Ovary (tissue), 10 donors: ENCODE measurements at regions of chr22 and their contacts with region 1.

Region 1: GRCh38 chr22:31089160-31090100 is 8.3 kb downstream of the SMTN start:
- DNase-seq: peak in 4 of 5 donors; percentile 60 to 71 (median 68)
- H3K4me3 ChIP-seq: no peak overlapping the region
- H3K27ac ChIP-seq: peak overlapping the region in 1 of 2 donors; percentile 15
- H3K4me1 ChIP-seq: peaks cover 7% of the 10 kb centered on the region
- H3K27me3 ChIP-seq: no peaks in the 10 kb centered on the region
- CTCF ChIP-seq: peak; percentile 64 to 68 (median 65)
- EP300 ChIP-seq: no peak
- POLR2A ChIP-seq: peak; percentile 8

Region 2: GRCh38 chr22:31148953-31149627 is 59.7 kb after region 1 on chr22:
- intact Hi-C with region 1: loop called in 2 of 4 experiments (anchors 5 to 10 kb)
- DNase-seq: peak; percentile 70 to 77 (median 72)
- H3K4me3 ChIP-seq: no peak overlapping the region
- H3K27ac ChIP-seq: no peak overlapping the region
- H3K4me1 ChIP-seq: no peaks in the 10 kb centered on the region
- H3K27me3 ChIP-seq: no peaks in the 10 kb centered on the region
- CTCF ChIP-seq: peak; percentile 61 to 84 (median 62)
- EP300 ChIP-seq: no peak
- POLR2A ChIP-seq: no peak

Region 3: GRCh38 chr22:31160328-31160978 is 71.0 kb after region 1 on chr22:
- intact Hi-C with region 1: no loop called
- DNase-seq: no peak
- H3K4me3 ChIP-seq: peak overlapping the region; percentile 93
- H3K27ac ChIP-seq: peak overlapping the region; percentile 77 to 79
- H3K4me1 ChIP-seq: peaks cover 8% of the 10 kb centered on the region
- H3K27me3 ChIP-seq: no peaks in the 10 kb centered on the region
- CTCF ChIP-seq: no peak
- EP300 ChIP-seq: no peak
- POLR2A ChIP-seq: no peak